Activated CD4-positive, alpha-beta T cell treated with anti-CD3 and anti-CD28 coated beads, Interleukin-2, amount 10 ng/mL, durations not matched to agents 24 days and 14 days (primary cell): ENCODE measurements at regions of chr3 and their contacts with region 1.

Region 1: GRCh38 chr3:69051756-69052471 is at the start of gene TMF1:
- DNase-seq: peak; percentile 99
- H3K4me3 Mint-ChIP-seq: peak within 1 kb of the TSS; percentile 95
- H3K27ac Mint-ChIP-seq: peak within 1 kb of the TSS; percentile 95
- H3K4me1 Mint-ChIP-seq: peaks cover 35% of the 10 kb centered on the region
- H3K27me3 Mint-ChIP-seq: no peaks in the 10 kb centered on the region
- total RNA-seq, gene TMF1: 35.9 and 39.0 TPM in 2 replicates

Region 2: GRCh38 chr3:69013253-69014021 is 38.5 kb before region 1 on chr3 and contains the start of gene EOGT:
- intact Hi-C with region 1: loop called (anchors 2 kb)
- DNase-seq: peak; percentile 95
- H3K4me3 Mint-ChIP-seq: peak within 1 kb of the TSS; percentile 85
- H3K27ac Mint-ChIP-seq: peak within 1 kb of the TSS; percentile 90
- H3K4me1 Mint-ChIP-seq: peaks cover 15% of the 10 kb centered on the region
- H3K27me3 Mint-ChIP-seq: no peaks in the 10 kb centered on the region
- total RNA-seq, gene EOGT: 12.6 and 13.5 TPM in 2 replicates

Region 3: GRCh38 chr3:69092030-69092516 is 40.2 kb after region 1 on chr3:
- intact Hi-C with region 1: loop called (anchors 2 kb)
- DNase-seq: peak; percentile 81
- H3K4me3 Mint-ChIP-seq: peak overlapping the region; percentile 89
- H3K27ac Mint-ChIP-seq: peak overlapping the region; percentile 97
- H3K4me1 Mint-ChIP-seq: peaks cover 76% of the 10 kb centered on the region
- H3K27me3 Mint-ChIP-seq: no peaks in the 10 kb centered on the region